GM10248 (cell line): ENCODE measurements at regions of chr5 and their contacts with region 1.

Region 1: DNA sequence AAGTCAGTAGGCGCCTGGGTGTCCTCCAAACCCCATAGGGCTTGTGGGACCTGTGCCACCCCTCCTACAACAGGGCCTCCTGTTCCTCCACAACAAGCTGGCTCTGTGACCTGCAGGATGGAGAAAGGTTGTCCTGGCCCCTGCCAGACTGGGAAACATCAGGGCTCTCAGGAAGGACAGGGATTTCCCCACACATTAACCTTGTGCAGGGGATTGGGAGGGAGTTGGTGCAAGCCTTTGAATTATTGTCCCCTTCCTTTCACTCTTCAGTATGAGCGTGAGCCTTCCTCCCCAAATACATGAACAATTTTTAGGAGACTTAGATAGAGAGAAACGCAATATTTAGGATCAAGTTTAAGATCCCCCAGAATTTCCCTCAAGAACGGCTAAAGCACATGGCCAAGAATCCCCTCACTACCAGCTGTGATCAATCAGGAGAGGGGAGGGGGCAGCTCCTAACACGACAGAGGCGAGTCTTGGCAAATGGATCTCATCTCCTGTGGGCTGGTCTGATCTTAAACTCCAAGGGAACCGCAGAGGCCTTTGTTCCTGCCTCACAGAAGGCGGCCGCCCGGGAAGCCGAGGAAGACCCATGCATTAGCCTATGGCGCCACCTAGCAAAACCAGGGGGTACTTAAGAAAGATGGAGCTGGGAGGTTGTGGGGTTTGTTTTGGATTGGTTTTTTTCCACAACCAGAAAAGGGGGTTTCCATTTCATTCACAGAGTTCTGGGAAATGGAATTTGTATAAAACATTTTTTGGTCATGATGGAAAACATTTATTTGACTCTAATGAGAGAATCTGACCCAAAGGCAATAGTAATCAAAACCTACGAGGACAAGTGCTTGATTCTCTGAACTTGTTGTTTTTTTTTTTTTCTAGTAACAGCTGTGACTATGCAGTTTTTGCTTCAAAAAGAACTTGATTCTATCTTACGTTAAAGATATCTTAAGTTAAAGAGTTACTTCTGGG is 36.1 kb upstream of the OSMR start:
- DNase-seq: peak; percentile 68
- CTCF ChIP-seq: peak; percentile 53

Region 2: GRCh38 chr5:38265546-38266179 is 544.0 kb before region 1 on chr5:
- CTCF ChIA-PET with region 1: interaction called, 29 read pairs
- POLR2A ChIA-PET with region 1: no interaction called
- DNase-seq: peak; percentile 54
- CTCF ChIP-seq: peak; percentile 78

Region 3: DNA sequence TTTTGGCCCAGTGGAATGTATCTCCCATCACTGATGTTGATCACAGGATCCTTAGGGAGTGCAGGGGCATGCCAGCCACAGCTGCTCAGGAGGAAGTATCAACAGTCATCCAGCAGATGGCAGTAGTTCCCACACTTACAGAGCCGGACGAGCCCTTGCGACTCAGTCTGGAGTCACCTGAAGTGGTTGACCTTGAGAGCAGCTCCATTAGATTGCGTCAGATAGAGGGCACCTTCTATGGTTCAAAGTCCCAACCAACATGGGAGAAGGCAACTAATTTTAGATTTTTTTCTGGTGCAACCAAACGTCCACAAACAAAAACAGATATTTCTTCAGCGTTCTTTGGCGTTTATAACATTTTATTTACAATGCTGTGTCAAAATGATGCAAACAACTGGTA is 426.8 kb before region 1 on chr5:
- CTCF ChIA-PET with region 1: interaction called, 33 read pairs
- POLR2A ChIA-PET with region 1: no interaction called
- DNase-seq: peak; percentile 59
- CTCF ChIP-seq: peak; percentile 71

Region 4: DNA sequence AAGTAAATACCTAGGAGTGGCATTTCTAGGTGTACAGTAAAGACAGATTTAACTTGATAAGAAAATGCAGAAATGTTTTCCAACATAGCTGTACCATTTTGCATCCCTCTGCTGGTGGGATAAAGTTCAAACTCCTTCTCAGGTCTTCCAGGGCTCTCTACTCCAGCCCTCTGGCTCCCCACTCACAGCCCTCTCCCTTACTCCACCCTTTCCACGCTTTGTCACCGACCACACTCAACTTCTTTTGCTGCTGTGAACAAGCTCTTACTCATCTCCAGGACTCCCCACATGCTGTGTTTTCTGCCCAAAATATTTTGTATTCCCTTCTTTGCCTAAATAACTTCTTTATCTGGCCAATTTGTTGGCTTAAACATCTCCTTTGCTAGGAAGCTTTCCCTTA is 54.5 kb before region 1 on chr5:
- CTCF ChIA-PET with region 1: no interaction called
- POLR2A ChIA-PET with region 1: no interaction called
- DNase-seq: no peak
- CTCF ChIP-seq: no peak

Region 5: GRCh38 chr5:38795986-38796741 is 13.5 kb before region 1 on chr5:
- CTCF ChIA-PET with region 1: interaction called, 35 read pairs
- POLR2A ChIA-PET with region 1: no interaction called
- DNase-seq: no peak
- CTCF ChIP-seq: no peak